ENCODE measurements at regions of chr1 and their contacts with region 1.

Region 1: DNA sequence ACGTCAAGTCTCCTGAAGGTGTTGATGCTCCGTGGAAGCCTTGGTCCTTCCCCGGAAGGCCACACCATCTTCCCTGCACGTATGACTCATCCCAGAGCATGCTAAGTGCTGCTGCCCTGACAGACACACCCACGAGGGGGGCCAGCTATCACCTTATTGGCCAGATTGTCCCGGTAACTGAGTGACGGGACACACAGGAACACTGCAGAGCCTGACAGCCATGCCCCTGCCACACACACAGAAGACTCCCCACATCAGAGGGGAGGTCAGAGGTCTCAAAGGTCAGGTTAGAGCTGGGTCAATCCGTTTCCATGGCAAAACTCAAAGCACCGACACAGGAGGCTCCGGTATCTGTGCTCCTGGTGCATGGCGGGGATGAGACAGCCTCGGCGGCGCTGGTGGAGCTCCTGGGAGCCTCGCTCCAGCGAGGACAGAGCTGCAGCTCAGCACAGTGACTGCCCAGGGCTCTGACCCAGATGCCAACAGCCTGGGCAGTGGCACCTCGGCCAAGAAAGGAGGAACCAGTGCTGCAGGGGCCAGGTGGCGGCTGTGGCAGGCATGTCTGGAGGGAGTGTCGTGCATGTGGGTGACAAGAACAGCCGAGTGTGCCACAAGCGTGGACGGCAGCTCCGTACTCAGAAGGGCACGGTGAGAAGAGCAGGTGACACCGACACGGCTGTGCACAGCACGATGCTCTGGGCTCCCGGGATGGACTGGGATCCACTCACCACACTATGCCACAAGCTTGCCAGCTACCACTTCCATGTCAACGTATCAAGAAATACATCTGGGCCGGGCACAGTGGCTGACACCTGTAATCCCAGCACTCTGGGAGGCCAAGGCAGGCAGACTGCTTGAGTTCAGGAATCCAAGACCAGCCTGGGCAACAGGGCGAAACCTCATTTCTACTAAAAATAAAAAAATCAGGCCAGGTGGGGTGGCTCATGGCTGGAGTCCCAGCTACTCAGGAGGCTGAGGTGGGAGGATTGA is 14.8 kb upstream of the TMEM240 start:
- DNase-seq: no peak
- ATAC-seq: peak; percentile 56
- H3K4me3 ChIP-seq: no peak overlapping the region
- H3K27ac ChIP-seq: no peak overlapping the region
- H3K4me1 ChIP-seq: peaks cover 4% of the 10 kb centered on the region; the same call in 1 of the 2 replicates
- H3K27me3 ChIP-seq: no peaks in the 10 kb centered on the region
- CTCF ChIP-seq: no peak

Region 2: GRCh38 chr1:1435106-1435903 is 119.9 kb before region 1 on chr1 and contains the start of gene VWA1:
- CTCF ChIA-PET with region 1: no interaction called
- POLR2A ChIA-PET with region 1: interaction called, 11 read pairs
- in situ Hi-C with region 1: no loop called
- intact Hi-C with region 1: no loop called
- DNase-seq: no peak
- ATAC-seq: peak; percentile 37
- H3K4me3 ChIP-seq: peak within 1 kb of the TSS; percentile 76 to 87
- H3K27ac ChIP-seq: peak within 1 kb of the TSS; percentile 99
- H3K4me1 ChIP-seq: peaks cover 62% of the 10 kb centered on the region
- H3K27me3 ChIP-seq: no peaks in the 10 kb centered on the region
- CTCF ChIP-seq: no peak
- total RNA-seq, gene VWA1: 858 TPM